Body of pancreas (tissue), 4 donors: ENCODE measurements at regions of chr11 and their contacts with region 1.

Region 1: GRCh38 chr11:74929431-74930363 is 19.2 kb downstream of the XRRA1 start:
- DNase-seq: peak; percentile 75 to 88 (median 82)
- ATAC-seq: peak; percentile 86
- H3K4me3 ChIP-seq: no peak overlapping the region
- H3K27ac ChIP-seq: no peak overlapping the region
- H3K4me1 ChIP-seq: no peaks in the 10 kb centered on the region
- H3K27me3 ChIP-seq: no peaks in the 10 kb centered on the region
- CTCF ChIP-seq: peak; percentile 77 to 86 (median 83)
- POLR2A ChIP-seq: no peak

Region 2: DNA sequence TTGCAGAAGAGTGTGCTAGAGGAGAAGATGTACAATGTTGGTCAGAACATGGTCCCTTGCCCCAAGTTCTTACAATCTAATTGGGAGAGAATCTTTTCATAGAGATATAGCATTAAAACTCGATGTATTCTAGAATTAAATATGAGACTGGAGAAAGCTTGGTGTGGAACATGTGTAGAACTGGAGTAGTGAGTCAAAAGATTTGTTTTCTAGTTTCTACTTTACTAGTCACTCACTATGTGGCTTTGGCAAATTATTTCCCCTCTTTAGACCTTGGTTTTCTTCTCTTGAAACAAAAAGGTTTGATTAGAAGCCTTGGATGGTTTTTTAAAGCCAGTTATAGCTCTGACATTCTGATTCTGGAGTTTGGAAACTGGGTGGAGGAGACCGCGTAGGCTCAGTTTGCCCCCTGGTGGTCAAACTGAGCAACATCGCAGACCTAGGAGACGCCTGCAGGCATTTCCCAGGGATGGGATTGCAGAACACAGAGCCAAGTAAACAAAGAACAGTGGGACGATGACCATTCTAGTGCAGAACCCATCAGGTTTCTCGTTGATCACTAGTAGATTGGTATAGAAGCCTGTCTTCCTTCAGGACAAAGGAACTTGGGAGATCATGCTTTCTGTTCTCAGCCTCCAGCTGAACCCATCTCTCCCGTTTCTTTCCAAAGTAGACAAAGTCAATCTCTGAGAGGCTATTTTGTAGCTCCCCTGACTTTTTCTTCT is 190.0 kb before region 1 on chr11:
- intact Hi-C with region 1: no loop called
- DNase-seq: peak; percentile 50 to 68 (median 64)
- ATAC-seq: peak; percentile 95
- H3K4me3 ChIP-seq: no peak overlapping the region
- H3K27ac ChIP-seq: no peak overlapping the region
- H3K4me1 ChIP-seq: no peaks in the 10 kb centered on the region
- H3K27me3 ChIP-seq: no peaks in the 10 kb centered on the region
- CTCF ChIP-seq: peak; percentile 73 to 88 (median 79)
- POLR2A ChIP-seq: no peak

Region 3: DNA sequence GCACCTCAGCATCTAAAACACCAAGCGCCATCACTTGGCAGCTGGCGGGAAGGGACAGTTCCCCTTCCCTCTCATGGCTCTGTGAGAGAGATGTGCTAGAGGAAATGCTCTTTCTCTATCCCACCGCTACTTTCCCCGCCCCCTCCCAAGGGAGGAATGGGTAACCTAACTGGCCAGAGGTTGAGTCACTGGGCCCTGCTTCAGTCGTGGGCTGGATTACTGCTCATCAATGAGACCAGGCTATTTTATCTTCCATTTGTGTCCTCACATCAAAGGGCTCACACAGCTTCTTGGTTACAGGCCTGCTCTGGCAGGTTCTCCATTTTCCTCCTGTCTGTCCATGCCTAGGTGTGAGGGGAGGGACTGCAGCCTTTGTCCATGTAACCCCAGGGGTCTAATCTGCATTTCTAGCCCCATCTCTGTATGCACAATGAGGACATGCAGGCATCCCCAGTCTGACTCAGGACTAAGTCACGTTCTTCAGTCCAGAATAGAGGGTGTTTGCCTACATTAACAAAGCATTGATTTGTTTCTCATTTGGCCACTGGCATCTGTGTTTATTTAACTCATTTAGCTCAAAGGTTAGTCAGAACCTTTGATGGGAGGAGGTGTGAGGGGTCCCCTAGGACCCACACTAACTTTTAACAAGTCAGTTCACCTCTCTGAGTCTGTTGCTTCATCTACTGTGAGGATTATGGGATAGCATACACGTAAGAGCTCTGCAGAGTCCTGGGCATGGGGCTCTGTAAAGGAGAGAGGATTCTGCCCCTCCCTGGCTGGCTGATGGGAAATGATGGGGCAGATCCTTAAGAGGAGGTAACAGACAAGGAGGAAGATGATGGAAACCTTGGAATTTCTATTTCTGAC is 79.9 kb before region 1 on chr11:
- intact Hi-C with region 1: no loop called
- DNase-seq: peak in 1 of 4 donors; percentile 18
- ATAC-seq: no peak
- H3K4me3 ChIP-seq: no peak overlapping the region
- H3K27ac ChIP-seq: no peak overlapping the region
- H3K4me1 ChIP-seq: no peaks in the 10 kb centered on the region
- H3K27me3 ChIP-seq: no peaks in the 10 kb centered on the region
- CTCF ChIP-seq: no peak
- POLR2A ChIP-seq: no peak

Region 4: GRCh38 chr11:74988541-74989260 is 59.0 kb after region 1 on chr11 and contains the start of gene NEU3:
- intact Hi-C with region 1: no loop called
- DNase-seq: peak; percentile 80 to 87 (median 84)
- ATAC-seq: peak; percentile 93
- H3K4me3 ChIP-seq: peak within 1 kb of the TSS; percentile 71 to 86
- H3K27ac ChIP-seq: peak within 1 kb of the TSS; percentile 71 to 86 (median 79)
- H3K4me1 ChIP-seq: peaks cover 22% of the 10 kb centered on the region
- H3K27me3 ChIP-seq: no peaks in the 10 kb centered on the region
- CTCF ChIP-seq: no peak
- POLR2A ChIP-seq: peak in 2 of 3 donors; percentile 56 to 59
- total RNA-seq, gene NEU3: 1.6 to 8.6 TPM

Region 5: GRCh38 chr11:75031771-75032549 is 102.3 kb after region 1 on chr11:
- intact Hi-C with region 1: loop called (anchors 10 kb)
- DNase-seq: peak; percentile 74 to 84 (median 81)
- ATAC-seq: peak; percentile 71
- H3K4me3 ChIP-seq: no peak overlapping the region
- H3K27ac ChIP-seq: no peak overlapping the region
- H3K4me1 ChIP-seq: no peaks in the 10 kb centered on the region
- H3K27me3 ChIP-seq: no peaks in the 10 kb centered on the region
- CTCF ChIP-seq: peak; percentile 60 to 78 (median 67)
- POLR2A ChIP-seq: no peak